AG04449 (cell line): ENCODE measurements at regions of chr14 and their contacts with region 1.

Region 1: DNA sequence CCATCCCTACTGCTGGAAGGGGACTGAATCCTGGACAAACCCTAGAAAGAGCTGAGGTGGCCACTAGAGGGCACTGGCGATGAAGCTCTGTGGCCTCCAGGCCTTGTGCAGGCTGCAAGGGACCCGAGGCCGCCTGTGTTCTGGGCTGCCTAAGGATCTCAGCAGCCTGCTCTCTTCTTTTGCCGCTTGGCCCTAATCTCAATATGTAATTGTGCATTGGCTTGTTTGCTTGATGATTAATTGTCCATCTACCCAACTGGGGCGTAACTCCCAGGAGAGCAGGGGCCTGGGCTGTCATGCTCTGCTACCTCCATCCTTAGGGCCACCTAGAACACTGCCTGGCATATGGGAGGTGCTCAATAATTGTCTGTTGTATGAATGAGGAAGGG is 73.8 kb downstream of the SYNE3 start:
- DNase-seq: no peak
- H3K4me3 ChIP-seq: no peak overlapping the region
- CTCF ChIP-seq: peak; percentile 93

Region 2: GRCh38 chr14:95431199-95432143 is 11.2 kb before region 1 on chr14:
- CTCF ChIA-PET with region 1: interaction called, 76 read pairs
- POLR2A ChIA-PET with region 1: no interaction called
- DNase-seq: no peak
- H3K4me3 ChIP-seq: no peak overlapping the region
- CTCF ChIP-seq: peak; percentile 42

Region 3: GRCh38 chr14:95460647-95461478 is 18.2 kb after region 1 on chr14:
- CTCF ChIA-PET with region 1: interaction called, 87 read pairs
- POLR2A ChIA-PET with region 1: no interaction called
- DNase-seq: peak; percentile 52
- H3K4me3 ChIP-seq: no peak overlapping the region; the same call in 1 of the 2 replicates
- CTCF ChIP-seq: no peak

Region 4: DNA sequence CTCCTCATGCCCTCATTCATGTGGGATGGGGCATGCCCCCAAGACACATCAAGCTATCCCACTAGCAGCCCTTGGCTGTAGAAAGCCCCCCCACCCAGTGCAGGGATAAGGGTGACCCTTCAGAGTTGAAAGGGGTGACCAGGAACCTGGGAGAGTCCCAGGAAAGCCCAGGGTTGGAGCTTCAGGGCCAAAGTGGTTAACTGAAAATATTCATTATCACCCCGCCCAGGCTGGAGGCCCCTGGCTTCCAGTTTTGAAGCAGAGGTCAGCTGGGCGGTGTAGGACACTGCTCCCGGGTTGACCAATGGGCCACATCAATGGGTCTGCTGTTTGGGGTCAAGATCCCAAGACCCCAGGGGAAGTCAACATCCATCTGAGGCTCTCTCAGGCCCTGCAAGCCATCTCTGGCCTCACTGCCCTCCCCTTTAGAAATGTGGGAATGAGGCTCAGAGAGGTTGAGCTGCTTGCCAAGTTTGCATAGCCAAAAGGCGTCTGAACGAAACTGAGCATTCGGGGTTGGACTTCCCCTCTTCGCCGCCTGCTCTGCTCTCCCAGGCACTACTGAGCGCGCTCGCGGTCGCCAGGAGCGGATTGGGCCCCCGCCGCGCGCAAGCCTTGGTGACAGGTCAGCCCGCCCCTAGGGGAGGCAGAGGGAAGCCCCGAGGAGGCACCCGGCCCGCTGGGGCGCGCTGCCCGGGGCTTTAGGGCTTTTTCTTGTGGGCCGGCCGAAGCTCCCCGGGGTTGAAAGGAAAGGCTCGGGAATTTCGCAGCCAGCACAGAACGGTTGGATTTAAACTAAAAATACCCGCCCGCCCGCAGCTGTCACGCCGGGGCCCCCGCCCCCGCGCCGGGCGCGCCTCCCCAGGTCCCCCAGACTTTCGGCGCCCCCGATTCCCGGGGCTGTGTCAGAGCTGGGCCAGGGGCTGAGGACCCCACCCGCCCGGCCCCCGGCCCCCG is 73.2 kb after region 1 on chr14:
- CTCF ChIA-PET with region 1: interaction called, 42 read pairs
- POLR2A ChIA-PET with region 1: interaction called, 4 read pairs
- DNase-seq: no peak
- H3K4me3 ChIP-seq: peak overlapping the region; percentile 60
- CTCF ChIP-seq: peak; percentile 43

Region 5: GRCh38 chr14:95534299-95535225 is 91.9 kb after region 1 on chr14 and contains the start of gene GLRX5:
- CTCF ChIA-PET with region 1: interaction called, 201 read pairs
- POLR2A ChIA-PET with region 1: interaction called, 3 read pairs
- DNase-seq: peak; percentile 100
- H3K4me3 ChIP-seq: peak within 1 kb of the TSS; percentile 85
- CTCF ChIP-seq: no peak

Region 6: DNA sequence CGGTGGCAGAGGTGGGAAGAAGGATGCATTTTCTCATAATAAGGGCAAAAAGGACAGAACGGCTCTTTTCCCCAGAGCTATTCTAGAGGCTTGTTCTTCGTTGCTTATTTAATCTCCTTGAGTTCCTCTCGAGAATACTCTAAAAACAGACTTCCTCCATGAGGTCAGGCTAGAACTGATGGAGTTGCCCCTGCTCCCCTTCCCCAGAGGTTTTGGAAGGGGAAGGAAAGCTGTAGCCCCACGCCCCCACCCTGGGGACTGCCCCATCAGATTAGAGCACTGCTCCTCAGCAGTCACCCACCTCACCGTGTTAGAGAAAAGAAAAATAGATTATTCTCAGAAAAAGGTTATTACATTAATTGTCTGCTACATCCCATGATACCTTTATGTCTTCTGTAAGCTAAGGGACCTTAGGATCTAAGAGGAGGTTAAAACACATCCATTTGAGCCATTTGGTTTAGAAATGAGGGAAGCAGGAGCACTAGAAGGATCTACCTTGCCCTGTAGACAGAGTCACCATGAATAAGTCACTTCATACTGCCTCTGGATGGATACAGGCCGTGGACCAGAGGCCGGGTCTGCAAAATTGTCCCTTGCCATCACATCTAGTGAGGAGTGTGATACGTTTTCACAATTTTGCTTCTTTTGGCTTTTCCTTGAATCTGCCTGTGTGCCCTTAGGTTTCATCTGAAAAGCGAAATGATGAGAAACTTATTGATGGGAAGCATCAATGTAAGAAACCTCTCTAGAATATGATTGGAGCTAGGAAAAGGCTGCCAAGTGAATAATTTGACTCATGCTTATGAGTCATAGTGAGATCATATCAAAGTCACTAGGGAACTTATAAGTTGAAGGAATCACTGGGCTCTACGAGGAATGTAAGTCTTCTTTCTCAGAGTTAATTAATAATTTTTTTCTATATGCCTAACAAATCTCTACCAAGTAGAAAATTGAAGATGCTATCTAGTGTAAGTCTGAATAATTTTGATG is 102.8 kb after region 1 on chr14:
- CTCF ChIA-PET with region 1: interaction called, 17 read pairs
- POLR2A ChIA-PET with region 1: no interaction called
- DNase-seq: peak; percentile 71
- H3K4me3 ChIP-seq: no peak overlapping the region
- CTCF ChIP-seq: no peak

Region 7: DNA sequence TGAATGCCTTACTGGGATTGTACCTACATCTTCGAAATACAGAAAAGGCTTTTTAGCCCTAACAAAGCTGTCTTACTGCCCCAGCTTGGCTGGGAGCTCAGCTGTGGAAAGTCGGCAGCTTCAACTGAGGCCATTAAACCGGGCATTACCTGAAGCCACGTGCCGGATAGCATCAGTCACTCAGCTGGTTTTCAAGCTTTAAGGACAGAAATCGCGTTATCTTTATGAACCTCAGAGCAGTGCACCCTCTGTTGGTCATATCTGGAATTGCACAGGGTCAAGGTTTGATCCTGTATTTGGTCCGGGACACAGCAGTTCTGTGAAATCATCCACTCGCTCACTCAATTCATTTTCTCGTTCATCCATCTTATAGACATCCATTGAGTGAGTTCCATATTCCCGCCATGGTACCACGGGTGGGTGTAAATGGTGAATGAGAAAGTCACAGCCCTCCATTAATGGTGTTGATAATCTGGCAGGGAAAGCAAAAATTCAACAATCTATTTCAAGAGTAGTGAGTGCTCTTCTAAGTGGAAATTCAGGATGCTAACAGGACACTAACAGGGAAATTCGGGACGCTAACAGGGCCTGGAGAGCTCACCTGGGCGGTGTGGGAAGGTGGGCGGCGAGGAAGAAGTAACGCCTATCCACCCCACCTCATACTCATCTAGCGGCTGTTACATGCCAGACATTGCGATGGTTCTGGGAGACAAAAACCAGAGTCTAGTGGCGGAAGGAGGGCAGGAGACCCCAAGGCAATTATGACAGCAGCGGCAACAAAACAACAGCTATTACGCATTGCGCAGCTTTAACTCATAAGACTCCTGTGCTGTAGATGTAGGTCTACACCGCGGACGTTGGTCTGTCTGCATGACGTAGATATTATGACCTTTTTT is 331.9 kb after region 1 on chr14:
- CTCF ChIA-PET with region 1: interaction called, 10 read pairs
- POLR2A ChIA-PET with region 1: no interaction called
- DNase-seq: no peak
- H3K4me3 ChIP-seq: no peak overlapping the region
- CTCF ChIP-seq: peak; percentile 80